H1 (cell line): ENCODE measurements at regions of chr4 and their contacts with region 1.

Region 1: GRCh38 chr4:157045507-157046127 is 30.3 kb upstream of the GLRB start:
- DNase-seq: no peak
- H3K4me3 ChIP-seq: no peak overlapping the region
- H3K27ac ChIP-seq: no peak overlapping the region
- H3K4me1 ChIP-seq: no peaks in the 10 kb centered on the region
- H3K27me3 ChIP-seq: no peaks in the 10 kb centered on the region
- CTCF ChIP-seq: peak; percentile 26 to 91 (median 73)
- EP300 ChIP-seq: no peak
- POLR2A ChIP-seq: no peak
- RAD21 ChIP-seq: peak; percentile 81 to 85

Region 2: DNA sequence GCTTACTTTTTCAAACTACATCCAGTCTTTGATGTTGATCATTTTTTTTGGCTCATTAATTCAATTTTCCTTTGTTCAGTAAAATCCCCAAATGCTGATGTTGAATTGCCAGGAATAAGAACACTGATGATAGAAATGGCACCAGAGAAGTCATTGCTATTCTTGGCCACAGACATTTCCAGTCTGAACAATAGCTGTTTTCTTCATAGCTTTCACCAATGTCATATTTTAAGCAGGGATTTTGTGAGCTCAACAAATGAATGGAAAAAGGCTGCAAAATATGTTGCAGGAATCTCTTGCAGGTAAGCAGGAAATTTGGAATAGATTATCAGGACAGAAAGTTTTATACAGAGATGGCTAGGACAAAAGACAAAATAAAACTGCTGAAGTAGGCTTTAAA is 10.1 kb before region 1 on chr4:
- CTCF ChIA-PET with region 1: interaction called, 19 read pairs
- POLR2A ChIA-PET with region 1: no interaction called
- DNase-seq: no peak
- H3K4me3 ChIP-seq: no peak overlapping the region
- H3K27ac ChIP-seq: no peak overlapping the region
- H3K4me1 ChIP-seq: no peaks in the 10 kb centered on the region
- H3K27me3 ChIP-seq: no peaks in the 10 kb centered on the region
- CTCF ChIP-seq: no peak
- EP300 ChIP-seq: no peak
- POLR2A ChIP-seq: no peak
- RAD21 ChIP-seq: no peak

Region 3: DNA sequence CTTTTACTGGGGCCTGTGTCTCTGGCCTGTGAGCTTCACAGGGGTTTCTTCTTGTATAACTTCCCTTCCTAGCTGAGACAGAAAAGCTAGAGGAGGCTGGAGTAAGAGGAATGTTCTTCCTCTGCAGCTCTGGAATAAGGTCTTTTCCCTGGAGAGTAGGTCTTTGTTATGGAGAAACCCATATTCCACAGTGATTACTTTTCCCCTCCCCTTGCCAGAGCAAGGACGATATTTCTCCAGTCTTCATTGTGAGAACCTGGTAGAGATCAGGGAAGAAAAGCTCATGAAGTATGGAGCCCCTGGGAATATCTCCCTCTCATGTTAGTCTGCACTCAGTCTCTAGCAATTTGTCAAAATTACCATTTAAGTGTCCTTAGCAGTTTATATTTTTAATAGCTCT is 11.6 kb after region 1 on chr4:
- CTCF ChIA-PET with region 1: interaction called, 18 read pairs
- POLR2A ChIA-PET with region 1: no interaction called
- DNase-seq: no peak
- H3K4me3 ChIP-seq: no peak overlapping the region
- H3K27ac ChIP-seq: no peak overlapping the region
- H3K4me1 ChIP-seq: no peaks in the 10 kb centered on the region
- H3K27me3 ChIP-seq: no peaks in the 10 kb centered on the region
- CTCF ChIP-seq: no peak
- EP300 ChIP-seq: no peak
- POLR2A ChIP-seq: no peak
- RAD21 ChIP-seq: no peak